Activated T-helper 1 cell treated with anti-CD3 and anti-CD28 coated beads, Interleukin-12 subunit alpha, Interleukin-12 subunit beta, Interleukin-2, Interleukin-4 antibody, amounts not matched to agents 30 ng/mL and 10 ng/mL and 1 ng/mL, durations not matched to agents 14 hours and 24 hours and 36 hours (primary cell): ENCODE measurements at regions of chr14 and their contacts with region 1.

Region 1: GRCh38 chr14:52961060-52961639 is 10.3 kb upstream of the FERMT2 start:
- DNase-seq: no peak
- H3K4me3 Mint-ChIP-seq: no peak overlapping the region
- H3K27ac Mint-ChIP-seq: no peak overlapping the region
- H3K4me1 Mint-ChIP-seq: no peaks in the 10 kb centered on the region
- H3K27me3 Mint-ChIP-seq: peaks cover 6% of the 10 kb centered on the region

Region 2: GRCh38 chr14:52351233-52352060 is 609.7 kb before region 1 on chr14:
- intact Hi-C with region 1: no loop called
- DNase-seq: peak; percentile 8
- H3K4me3 Mint-ChIP-seq: peak overlapping the region; percentile 75
- H3K27ac Mint-ChIP-seq: peak overlapping the region; percentile 96
- H3K4me1 Mint-ChIP-seq: peaks cover 73% of the 10 kb centered on the region
- H3K27me3 Mint-ChIP-seq: no peaks in the 10 kb centered on the region

Region 3: GRCh38 chr14:52824507-52824906 is 136.6 kb before region 1 on chr14:
- intact Hi-C with region 1: loop called (anchors 1 kb)
- DNase-seq: no peak
- H3K4me3 Mint-ChIP-seq: no peak overlapping the region
- H3K27ac Mint-ChIP-seq: no peak overlapping the region
- H3K4me1 Mint-ChIP-seq: no peaks in the 10 kb centered on the region
- H3K27me3 Mint-ChIP-seq: peaks cover 14% of the 10 kb centered on the region

Region 4: DNA sequence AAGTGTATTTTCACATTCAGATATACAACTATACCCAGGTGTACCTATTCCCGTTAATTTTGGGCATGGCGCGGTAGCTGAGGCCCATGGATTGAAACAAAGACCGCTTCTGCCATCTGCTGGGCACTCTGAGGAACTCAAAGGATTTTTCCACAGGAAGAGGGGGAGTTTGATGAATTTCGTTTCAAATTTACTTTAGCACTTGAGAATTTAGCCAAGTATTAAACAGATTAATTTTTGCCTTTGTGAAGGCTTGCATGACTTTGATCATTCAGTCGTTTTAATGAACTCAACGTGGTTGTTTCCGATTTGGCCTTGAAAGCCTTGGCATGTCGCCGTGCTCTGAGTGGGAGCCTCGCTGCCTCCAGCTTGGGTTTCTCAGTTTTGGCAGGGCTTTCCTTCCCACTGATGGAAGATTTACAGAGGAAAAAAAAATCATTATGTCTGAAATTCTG is 345.1 kb after region 1 on chr14:
- intact Hi-C with region 1: loop called (anchors 2 kb)
- DNase-seq: peak; percentile 5
- H3K4me3 Mint-ChIP-seq: peak overlapping the region; percentile 76
- H3K27ac Mint-ChIP-seq: no peak overlapping the region
- H3K4me1 Mint-ChIP-seq: peaks cover 11% of the 10 kb centered on the region
- H3K27me3 Mint-ChIP-seq: peaks cover 8% of the 10 kb centered on the region